ENCODE measurements at regions of chr16 and their contacts with region 1.

Region 1: GRCh38 chr16:30984669-30985400 is at the start of gene HSD3B7:
- DNase-seq: peak; percentile 81
- H3K4me3 ChIP-seq: peak within 1 kb of the TSS; percentile 21 to 34
- H3K27ac ChIP-seq: peak within 1 kb of the TSS; percentile 16 to 61
- H3K4me1 ChIP-seq: no peaks in the 10 kb centered on the region
- H3K27me3 ChIP-seq: no peaks in the 10 kb centered on the region
- CTCF ChIP-seq: peak; percentile 86 to 98 (median 94)
- POLR2A ChIP-seq: peak; percentile 14
- total RNA-seq, gene HSD3B7: 10.3 to 10.7 TPM

Region 2: DNA sequence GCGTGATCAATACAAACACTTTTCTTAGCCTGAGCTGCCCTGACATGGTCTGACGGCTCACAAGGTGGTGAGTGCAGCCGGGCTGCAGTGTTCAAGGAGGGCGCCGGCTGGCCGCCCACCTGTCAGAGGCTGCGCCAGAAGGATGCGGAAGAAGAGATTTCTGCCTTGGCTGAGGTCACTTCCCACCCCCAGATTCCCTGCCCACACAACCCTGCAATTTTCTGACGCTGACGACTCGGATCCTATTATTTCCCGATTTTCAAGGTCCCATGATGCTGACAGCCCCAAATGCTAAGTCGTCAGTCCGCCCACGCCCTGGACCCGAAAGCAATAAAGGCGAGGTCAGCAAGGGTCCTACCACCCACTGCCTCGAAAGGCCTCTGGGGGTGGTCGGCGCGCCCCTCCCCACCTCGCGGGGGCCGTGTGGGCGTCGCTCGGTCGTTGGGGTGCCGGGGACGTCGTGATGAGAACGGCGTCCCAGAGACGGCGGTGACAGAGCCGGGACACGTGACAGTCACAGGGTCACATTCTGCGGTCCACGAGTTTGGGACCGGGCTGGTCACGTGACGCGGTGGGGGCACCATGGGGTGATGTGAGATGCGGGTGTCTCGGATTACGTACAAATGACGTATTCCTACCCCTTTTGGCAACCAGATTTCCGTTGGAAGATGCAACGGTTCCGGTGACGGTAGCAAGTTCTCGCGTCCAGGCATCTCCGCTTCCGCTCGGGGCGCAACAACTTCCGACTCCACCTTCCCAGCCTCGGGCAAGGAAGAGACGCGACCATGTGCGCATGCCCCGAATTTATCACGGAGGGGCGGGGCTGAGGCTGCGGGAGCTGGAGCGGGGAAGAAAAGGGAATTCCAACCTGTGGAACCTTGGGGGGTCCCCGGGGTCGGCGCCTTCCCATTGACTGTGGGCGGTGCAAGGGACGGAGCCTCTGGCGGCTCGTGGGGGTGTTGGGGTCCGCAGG is 48.2 kb after region 1 on chr16 and contains the start of gene STX4:
- intact Hi-C with region 1: loop called (anchors 2 kb)
- DNase-seq: peak; percentile 96
- H3K4me3 ChIP-seq: peak within 1 kb of the TSS; percentile 56 to 97
- H3K27ac ChIP-seq: peak within 1 kb of the TSS; percentile 88 to 92
- H3K4me1 ChIP-seq: peaks cover 5% of the 10 kb centered on the region
- H3K27me3 ChIP-seq: no peaks in the 10 kb centered on the region
- CTCF ChIP-seq: peak in 2 of 4 experiments; percentile 25 to 30
- POLR2A ChIP-seq: peak; percentile 58
- total RNA-seq, gene STX4: 40.7 to 51.7 TPM

Region 3: GRCh38 chr16:31094424-31095120 is 109.7 kb after region 1 on chr16 and contains the start of gene VKORC1:
- intact Hi-C with region 1: loop called (anchors 10 kb)
- DNase-seq: peak; percentile 96
- H3K4me3 ChIP-seq: peak within 1 kb of the TSS; percentile 58 to 60
- H3K27ac ChIP-seq: peak within 1 kb of the TSS; percentile 82
- H3K4me1 ChIP-seq: no peaks in the 10 kb centered on the region
- H3K27me3 ChIP-seq: no peaks in the 10 kb centered on the region
- CTCF ChIP-seq: peak in 2 of 4 experiments; percentile 34 to 46
- POLR2A ChIP-seq: peak; percentile 81
- total RNA-seq, gene VKORC1: 106 to 175 TPM

Region 4: DNA sequence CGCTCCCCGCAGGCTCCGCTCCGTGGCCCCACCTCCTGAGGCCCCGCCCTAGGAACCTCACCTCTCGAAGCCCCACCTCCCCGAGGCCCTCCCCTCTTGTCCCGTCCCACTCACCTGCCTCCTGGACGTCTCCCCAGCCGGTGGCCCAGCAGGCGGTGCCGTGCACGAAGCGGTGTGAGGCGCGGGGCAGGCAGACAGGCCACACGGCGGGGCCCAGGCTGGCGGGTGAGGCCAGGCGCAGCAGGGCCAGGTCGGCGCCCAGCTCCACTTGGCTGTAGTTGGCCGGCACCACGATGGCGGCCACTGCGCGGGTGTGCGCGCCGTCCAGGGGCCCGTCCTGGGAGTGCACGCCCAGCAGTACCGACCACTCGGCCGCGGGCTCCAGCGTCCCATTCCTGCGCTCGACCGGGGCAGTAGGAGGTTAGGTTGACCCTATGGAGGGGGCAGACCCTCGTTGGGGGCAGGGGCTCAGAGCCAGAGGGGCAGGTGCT is 163.5 kb after region 1 on chr16:
- intact Hi-C with region 1: loop called (anchors 5 kb)
- DNase-seq: peak; percentile 59
- H3K4me3 ChIP-seq: no peak overlapping the region
- H3K27ac ChIP-seq: no peak overlapping the region
- H3K4me1 ChIP-seq: no peaks in the 10 kb centered on the region
- H3K27me3 ChIP-seq: no peaks in the 10 kb centered on the region
- CTCF ChIP-seq: peak in 1 of 4 experiments; percentile 13
- POLR2A ChIP-seq: no peak

Region 5: GRCh38 chr16:31441956-31442355 is 457.1 kb after region 1 on chr16:
- intact Hi-C with region 1: loop called (anchors 2 kb)
- DNase-seq: no peak
- H3K4me3 ChIP-seq: peak overlapping the region; percentile 62 to 73
- H3K27ac ChIP-seq: peak overlapping the region; percentile 86 to 90
- H3K4me1 ChIP-seq: no peaks in the 10 kb centered on the region
- H3K27me3 ChIP-seq: no peaks in the 10 kb centered on the region
- CTCF ChIP-seq: no peak
- POLR2A ChIP-seq: no peak

Region 6: DNA sequence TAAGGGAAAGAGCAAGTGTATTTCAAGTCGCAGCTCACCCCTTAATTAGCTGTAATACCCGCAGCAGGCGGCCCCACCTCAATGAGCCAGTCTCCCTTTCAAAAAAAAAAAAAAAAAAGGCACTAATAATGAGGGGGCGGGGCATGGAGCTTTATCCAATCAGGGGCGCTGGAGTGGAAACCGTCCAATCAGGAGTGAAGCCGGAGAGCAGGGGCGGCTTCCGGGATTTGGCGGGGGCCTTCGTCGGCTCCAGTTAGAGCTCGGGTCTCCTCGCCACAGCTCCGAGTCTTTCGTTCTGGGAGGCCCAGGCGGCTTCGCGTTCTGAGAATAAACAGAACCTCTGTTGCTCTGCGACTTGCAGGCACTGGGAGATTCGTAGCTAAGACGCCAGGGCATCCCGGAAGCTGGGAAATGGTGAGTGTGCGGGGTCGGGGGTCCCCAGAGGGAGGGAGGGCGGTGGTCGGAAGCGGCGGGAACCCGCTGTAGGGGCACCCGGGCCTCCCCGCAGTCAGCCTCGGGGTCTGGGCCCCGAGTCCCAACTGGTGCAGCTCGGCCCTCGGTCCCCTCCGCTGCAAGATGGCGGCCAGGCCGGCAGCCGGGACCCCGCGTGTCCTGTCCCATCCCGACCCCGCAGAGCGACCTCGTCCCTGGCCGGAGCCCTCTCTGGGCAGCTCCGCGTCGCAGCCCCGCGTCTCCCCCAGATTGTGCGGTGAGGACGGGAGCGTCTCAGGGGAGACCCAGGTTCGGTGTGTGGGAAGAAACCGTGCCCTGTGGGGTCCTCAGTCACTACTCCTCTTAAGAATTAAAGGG is 888.9 kb after region 1 on chr16 and contains the start of gene ZNF267:
- intact Hi-C with region 1: loop called (anchors 10 kb)
- DNase-seq: peak; percentile 95
- H3K4me3 ChIP-seq: peak within 1 kb of the TSS; percentile 96 to 99
- H3K27ac ChIP-seq: peak within 1 kb of the TSS; percentile 84 to 85
- H3K4me1 ChIP-seq: no peaks in the 10 kb centered on the region
- H3K27me3 ChIP-seq: no peaks in the 10 kb centered on the region
- CTCF ChIP-seq: no peak
- POLR2A ChIP-seq: peak; percentile 88
- total RNA-seq, gene ZNF267: 6.9 to 21.4 TPM

Measured in prostate gland (tissue), 2 donors.